ENCODE measurements at regions of chr3 and their contacts with region 1.

Region 1: DNA sequence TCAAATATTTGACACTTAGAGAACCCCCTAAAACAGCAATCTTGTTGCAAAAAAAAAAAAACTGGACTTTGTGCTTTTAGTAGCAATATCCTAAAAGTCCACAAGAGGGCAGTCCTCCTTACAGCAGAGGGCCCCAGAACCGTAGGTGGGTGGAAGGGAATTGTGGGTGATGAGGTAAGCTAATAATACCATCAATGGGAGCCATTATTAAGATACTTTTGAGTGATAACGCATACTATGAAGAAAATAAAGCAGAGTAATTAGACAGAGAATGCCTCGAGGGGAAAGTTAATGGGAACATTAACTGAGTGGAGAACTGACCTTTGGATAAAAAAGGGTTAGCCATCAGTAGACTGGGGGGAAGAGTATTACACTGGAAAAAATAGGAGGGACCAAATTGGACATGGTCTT is 229.9 kb downstream of the THRB start:
- DNase-seq: no peak
- H3K4me3 ChIP-seq: no peak overlapping the region
- H3K27ac ChIP-seq: no peak overlapping the region
- H3K4me1 ChIP-seq: no peaks in the 10 kb centered on the region
- H3K27me3 ChIP-seq: no peaks in the 10 kb centered on the region
- CTCF ChIP-seq: peak; percentile 91

Region 2: DNA sequence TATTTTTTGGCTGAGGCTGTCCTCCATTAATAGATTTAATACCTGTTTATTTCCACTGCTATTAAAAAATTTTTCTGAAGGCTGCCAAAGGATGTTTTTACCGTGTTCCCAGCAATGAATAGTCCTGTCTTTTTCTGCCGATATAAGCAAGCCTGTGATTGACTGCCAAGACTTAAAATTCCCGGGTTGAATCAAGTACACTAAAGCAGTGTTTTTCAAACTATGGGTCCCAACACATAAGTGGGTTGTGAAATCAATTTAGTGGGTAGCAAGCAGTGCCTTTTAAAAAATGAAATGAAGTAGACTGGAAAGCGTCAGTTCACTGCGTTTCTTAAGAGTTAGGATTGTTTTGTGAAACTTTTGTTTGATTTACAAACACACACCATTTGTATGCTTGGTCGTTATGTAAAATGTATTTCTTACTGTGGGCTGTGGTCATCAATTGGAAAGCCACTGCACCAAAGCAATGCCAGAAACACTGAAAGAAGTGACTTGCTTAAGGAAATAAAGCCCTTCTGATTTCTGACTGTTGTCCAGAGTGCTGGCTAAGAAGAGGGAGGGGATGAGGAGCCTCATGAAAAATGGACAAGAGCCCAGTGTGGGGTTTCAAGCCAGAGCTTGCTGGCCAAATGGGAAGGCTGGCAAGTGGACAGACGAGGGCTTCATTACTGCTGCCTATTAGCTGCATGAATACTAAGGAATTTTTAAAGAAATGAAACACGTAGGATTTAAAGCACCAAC is 23.9 kb after region 1 on chr3:
- CTCF ChIA-PET with region 1: no interaction called
- POLR2A ChIA-PET with region 1: interaction called, 15 read pairs
- intact Hi-C with region 1: no loop called
- DNase-seq: no peak
- H3K4me3 ChIP-seq: no peak overlapping the region
- H3K27ac ChIP-seq: no peak overlapping the region
- H3K4me1 ChIP-seq: no peaks in the 10 kb centered on the region
- H3K27me3 ChIP-seq: no peaks in the 10 kb centered on the region
- CTCF ChIP-seq: no peak

Region 3: GRCh38 chr3:24318668-24319287 is 54.0 kb after region 1 on chr3:
- CTCF ChIA-PET with region 1: no interaction called
- POLR2A ChIA-PET with region 1: interaction called, 4 read pairs
- intact Hi-C with region 1: loop called (anchors 10 kb)
- DNase-seq: peak; percentile 15 to 89
- H3K4me3 ChIP-seq: no peak overlapping the region
- H3K27ac ChIP-seq: peak overlapping the region; percentile 33; the same call in 1 of the 2 replicates
- H3K4me1 ChIP-seq: peaks cover 47% of the 10 kb centered on the region
- H3K27me3 ChIP-seq: no peaks in the 10 kb centered on the region
- CTCF ChIP-seq: no peak

Region 4: DNA sequence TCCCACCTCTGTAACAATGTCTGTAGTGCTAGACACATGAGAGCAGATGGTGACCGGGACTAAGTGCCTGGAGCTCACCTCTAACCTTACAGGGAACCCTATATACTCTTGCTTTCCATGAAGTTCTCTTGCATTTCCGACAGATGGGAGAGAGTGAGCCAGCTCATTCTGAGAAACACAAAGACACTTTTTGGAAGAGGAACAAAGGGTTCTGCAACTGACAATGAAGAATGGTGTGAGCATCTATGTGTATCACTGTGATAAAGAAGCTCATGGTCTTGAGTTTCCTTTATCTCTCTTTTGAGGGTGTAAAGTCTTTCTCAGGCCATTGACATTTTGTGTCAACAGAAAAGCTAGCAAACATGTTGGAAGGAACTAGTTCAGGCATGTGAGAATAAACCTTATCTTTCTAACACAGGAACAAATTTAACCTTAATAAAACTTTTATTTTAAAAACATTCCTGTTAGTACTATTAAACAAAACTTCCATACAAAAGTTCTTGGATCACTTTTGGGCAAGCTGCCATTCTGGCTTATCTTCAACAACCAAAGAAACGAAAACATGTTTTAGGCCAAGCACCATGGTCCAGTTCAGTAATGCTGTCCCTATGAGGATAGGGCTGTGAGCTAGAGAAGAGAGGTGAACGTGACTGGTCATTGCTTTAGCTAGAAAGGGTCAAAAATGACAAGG is 87.2 kb after region 1 on chr3:
- CTCF ChIA-PET with region 1: no interaction called
- POLR2A ChIA-PET with region 1: no interaction called
- intact Hi-C with region 1: no loop called
- DNase-seq: no peak
- H3K4me3 ChIP-seq: no peak overlapping the region
- H3K27ac ChIP-seq: no peak overlapping the region
- H3K4me1 ChIP-seq: peaks cover 2% of the 10 kb centered on the region
- H3K27me3 ChIP-seq: no peaks in the 10 kb centered on the region
- CTCF ChIP-seq: no peak

Region 5: GRCh38 chr3:24365194-24365612 is 100.5 kb after region 1 on chr3:
- CTCF ChIA-PET with region 1: no interaction called
- POLR2A ChIA-PET with region 1: no interaction called
- intact Hi-C with region 1: loop called (anchors 10 kb)
- DNase-seq: peak; percentile 62 to 90
- H3K4me3 ChIP-seq: no peak overlapping the region; the same call in 1 of the 2 replicates
- H3K27ac ChIP-seq: peak overlapping the region; percentile 69
- H3K4me1 ChIP-seq: peaks cover 40% of the 10 kb centered on the region
- H3K27me3 ChIP-seq: no peaks in the 10 kb centered on the region
- CTCF ChIP-seq: no peak

Region 6: GRCh38 chr3:24451461-24452099 is 186.8 kb after region 1 on chr3:
- CTCF ChIA-PET with region 1: no interaction called
- POLR2A ChIA-PET with region 1: no interaction called
- intact Hi-C with region 1: loop called (anchors 5 kb)
- DNase-seq: peak; percentile 37 to 91
- H3K4me3 ChIP-seq: 0 out of 2 replicates have a peak overlapping the region, but pooled peaks have one; percentile 27
- H3K27ac ChIP-seq: peak overlapping the region; percentile 80
- H3K4me1 ChIP-seq: peaks cover 57% of the 10 kb centered on the region
- H3K27me3 ChIP-seq: no peaks in the 10 kb centered on the region
- CTCF ChIP-seq: no peak

Region 7: DNA sequence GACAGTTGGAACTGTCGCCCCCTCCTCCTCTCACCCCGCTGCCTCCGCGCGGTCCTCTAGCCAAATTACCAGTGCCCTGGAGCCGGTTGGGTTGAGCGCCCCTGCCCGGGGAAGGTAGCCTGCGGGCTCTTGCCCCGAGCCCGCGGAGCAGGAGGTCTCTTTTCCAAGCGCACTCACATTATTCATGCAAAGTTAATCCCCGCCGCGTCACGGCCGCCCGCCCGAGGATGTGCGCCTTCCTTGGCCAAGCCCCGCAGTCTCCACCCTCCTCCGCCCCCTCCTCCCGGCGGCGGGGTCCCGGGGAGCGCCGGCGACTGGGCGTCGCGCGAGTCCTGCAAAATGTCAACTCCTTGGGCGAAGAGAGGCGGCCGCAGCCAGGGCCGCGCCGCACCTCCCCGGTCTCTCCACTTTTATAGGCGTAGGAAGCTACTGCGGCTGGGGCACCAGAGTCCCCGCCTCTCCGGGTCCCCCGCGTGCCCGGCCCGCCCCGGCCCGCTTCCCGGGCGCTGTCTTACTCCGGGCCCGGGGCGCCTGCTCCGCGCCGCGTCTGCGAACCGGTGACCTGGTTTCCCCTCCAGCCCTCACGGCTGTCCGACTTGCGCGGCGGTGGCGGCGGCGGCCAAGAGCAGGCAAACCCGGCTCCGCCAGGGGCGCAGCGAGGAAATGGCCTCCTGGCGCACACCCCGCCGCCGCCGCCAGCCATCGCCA is 230.0 kb after region 1 on chr3 and contains the start of gene THRB:
- CTCF ChIA-PET with region 1: no interaction called
- POLR2A ChIA-PET with region 1: interaction called, 6 read pairs
- intact Hi-C with region 1: loop called (anchors 2 kb)
- DNase-seq: peak; percentile 49 to 75
- H3K4me3 ChIP-seq: peak within 1 kb of the TSS; percentile 65
- H3K27ac ChIP-seq: peak within 1 kb of the TSS; percentile 89
- H3K4me1 ChIP-seq: peaks cover 46% of the 10 kb centered on the region
- H3K27me3 ChIP-seq: no peaks in the 10 kb centered on the region
- CTCF ChIP-seq: peak; percentile 36; the same call in 1 of the 2 replicates
- total RNA-seq, gene THRB: 9.7 and 11.2 TPM in 2 replicates

Region 8: DNA sequence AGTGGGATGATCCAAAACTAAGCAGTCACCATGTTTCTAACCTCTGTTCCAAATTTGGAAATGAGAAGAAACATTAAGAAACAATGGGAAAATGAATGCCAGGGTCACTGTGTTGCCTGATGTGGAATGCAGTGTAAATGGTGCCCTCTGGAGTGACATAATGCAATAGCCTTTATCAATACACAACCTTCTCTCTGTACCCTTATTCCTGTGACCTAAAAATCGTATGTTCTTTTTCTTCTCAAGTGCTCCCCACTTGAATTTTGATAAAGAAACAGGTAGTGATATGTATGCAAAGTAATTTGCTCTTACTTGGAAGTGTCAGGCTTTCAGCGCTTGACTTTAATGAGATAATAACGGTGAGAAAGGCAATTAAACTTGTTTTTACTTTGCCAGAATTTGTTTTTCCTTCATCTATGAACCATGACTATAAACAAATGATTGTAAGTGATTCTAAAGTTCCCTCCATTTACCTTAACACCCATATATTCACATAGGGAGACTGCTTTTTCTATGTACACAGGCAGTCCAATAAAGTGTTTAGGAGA is 375.7 kb after region 1 on chr3:
- CTCF ChIA-PET with region 1: no interaction called
- POLR2A ChIA-PET with region 1: no interaction called
- intact Hi-C with region 1: loop called (anchors 2 kb)
- DNase-seq: peak in 1 of 2 experiments; percentile 6
- H3K4me3 ChIP-seq: no peak overlapping the region
- H3K27ac ChIP-seq: no peak overlapping the region
- H3K4me1 ChIP-seq: no peaks in the 10 kb centered on the region
- H3K27me3 ChIP-seq: no peaks in the 10 kb centered on the region
- CTCF ChIP-seq: peak; percentile 65

Measured in PC-9 (cell line).